Activated CD4-positive, alpha-beta T cell treated with anti-CD3 and anti-CD28 coated beads for 36 hours (primary cell): ENCODE measurements at regions of chr12 and their contacts with region 1.

Region 1: DNA sequence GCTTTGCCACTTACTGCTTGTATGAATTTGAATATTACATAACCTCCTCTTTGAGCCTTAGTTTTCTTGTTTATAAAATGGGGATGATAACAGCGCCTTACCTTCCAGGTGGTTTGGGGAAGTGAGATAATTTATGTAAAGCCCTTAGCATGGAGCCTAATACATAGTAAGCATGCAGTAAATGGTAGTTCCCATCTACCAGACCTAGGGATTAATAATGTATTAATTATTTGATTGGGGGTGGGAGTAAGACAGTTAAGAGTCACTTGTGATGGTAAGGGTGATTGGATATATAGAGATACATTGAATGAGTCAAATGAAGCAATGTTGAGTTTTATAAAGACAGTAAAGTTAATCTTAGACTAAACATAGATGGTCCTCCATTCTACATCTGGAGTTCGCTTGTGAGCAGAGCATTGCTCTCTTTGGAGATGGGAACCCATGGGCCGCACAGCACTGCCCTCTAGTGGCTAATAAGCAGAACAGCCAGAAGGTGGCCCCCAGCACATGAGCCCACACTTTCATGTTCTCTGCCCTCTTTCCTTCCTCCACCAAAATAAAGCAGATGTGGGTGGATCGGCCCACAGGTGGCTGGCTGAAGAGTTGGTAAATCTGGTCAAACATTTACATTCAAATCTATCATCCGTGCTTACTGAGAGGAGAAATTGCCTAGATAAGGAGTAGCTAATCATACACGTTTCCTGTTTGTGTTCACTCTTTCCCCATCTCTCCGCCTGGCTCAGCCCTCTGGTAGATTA is 26.5 kb upstream of the TAMALIN start:
- DNase-seq: peak; percentile 81
- ATAC-seq: peak; percentile 96
- H3K4me3 Mint-ChIP-seq: no peak overlapping the region
- H3K27ac Mint-ChIP-seq: peak overlapping the region; percentile 17
- H3K4me1 Mint-ChIP-seq: peaks cover 34% of the 10 kb centered on the region
- H3K27me3 Mint-ChIP-seq: no peaks in the 10 kb centered on the region

Region 2: GRCh38 chr12:51887476-51888315 is 92.5 kb before region 1 on chr12 and contains the start of gene ANKRD33:
- CTCF ChIA-PET with region 1: no interaction called
- POLR2A ChIA-PET with region 1: no interaction called
- intact Hi-C with region 1: no loop called
- DNase-seq: no peak
- ATAC-seq: no peak
- H3K4me3 Mint-ChIP-seq: no peak within 1 kb of the TSS
- H3K27ac Mint-ChIP-seq: no peak within 1 kb of the TSS
- H3K4me1 Mint-ChIP-seq: peaks cover 19% of the 10 kb centered on the region
- H3K27me3 Mint-ChIP-seq: no peaks in the 10 kb centered on the region
- total RNA-seq, gene ANKRD33: not detected

Region 3: DNA sequence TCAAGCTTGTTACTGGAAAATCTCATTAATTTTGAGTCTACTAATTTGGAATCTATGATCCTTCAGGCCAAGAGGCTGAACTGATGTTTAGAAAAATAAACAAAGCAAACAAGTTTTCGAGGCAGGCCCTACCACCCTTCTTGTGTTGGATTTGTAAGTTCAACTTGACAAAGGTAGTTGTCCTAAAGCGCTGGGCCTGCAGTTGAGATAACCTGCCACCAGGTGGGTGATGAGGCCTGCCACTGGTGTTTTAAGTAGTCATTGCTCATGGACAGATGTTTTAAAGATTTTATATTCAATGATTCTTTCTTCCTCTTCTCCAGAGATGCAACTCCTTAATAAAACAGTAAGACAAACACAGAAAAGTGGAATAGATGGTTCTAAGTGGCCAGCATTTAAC is 53.5 kb before region 1 on chr12:
- CTCF ChIA-PET with region 1: interaction called, 12 read pairs
- POLR2A ChIA-PET with region 1: no interaction called
- intact Hi-C with region 1: loop called (anchors 1 kb)
- DNase-seq: peak; percentile 81
- ATAC-seq: peak; percentile 61
- H3K4me3 Mint-ChIP-seq: no peak overlapping the region
- H3K27ac Mint-ChIP-seq: no peak overlapping the region
- H3K4me1 Mint-ChIP-seq: peaks cover 11% of the 10 kb centered on the region
- H3K27me3 Mint-ChIP-seq: no peaks in the 10 kb centered on the region

Region 4: GRCh38 chr12:52004042-52004648 is 23.9 kb after region 1 on chr12:
- CTCF ChIA-PET with region 1: interaction called, 13 read pairs
- POLR2A ChIA-PET with region 1: no interaction called
- intact Hi-C with region 1: no loop called
- DNase-seq: peak; percentile 43
- ATAC-seq: no peak
- H3K4me3 Mint-ChIP-seq: no peak overlapping the region
- H3K27ac Mint-ChIP-seq: no peak overlapping the region
- H3K4me1 Mint-ChIP-seq: peaks cover 13% of the 10 kb centered on the region
- H3K27me3 Mint-ChIP-seq: peaks cover 4% of the 10 kb centered on the region

Region 5: GRCh38 chr12:52014567-52015530 is 34.6 kb after region 1 on chr12:
- CTCF ChIA-PET with region 1: no interaction called
- POLR2A ChIA-PET with region 1: no interaction called
- intact Hi-C with region 1: no loop called
- DNase-seq: no peak
- ATAC-seq: no peak
- H3K4me3 Mint-ChIP-seq: no peak overlapping the region
- H3K27ac Mint-ChIP-seq: no peak overlapping the region
- H3K4me1 Mint-ChIP-seq: no peaks in the 10 kb centered on the region
- H3K27me3 Mint-ChIP-seq: no peaks in the 10 kb centered on the region